B cell (primary cell): ENCODE measurements at regions of chr7 and their contacts with region 1.

Region 1: GRCh38 chr7:2451171-2452073 is 24.8 kb downstream of the GRIFIN start:
- DNase-seq: peak; percentile 83
- ATAC-seq: peak; percentile 96
- H3K4me3 ChIP-seq: peak overlapping the region in 4 of 5 experiments; percentile 34 to 56 (median 50)
- H3K4me3 Mint-ChIP-seq: peak overlapping the region; percentile 80
- H3K27ac ChIP-seq: no peak overlapping the region
- H3K27ac Mint-ChIP-seq: peak overlapping the region; percentile 26
- H3K4me1 ChIP-seq: peaks cover 8 to 11% of the 10 kb centered on the region in 2 donors
- H3K4me1 Mint-ChIP-seq: peaks cover 10% of the 10 kb centered on the region
- H3K27me3 ChIP-seq: no peaks in the 10 kb centered on the region
- H3K27me3 Mint-ChIP-seq: no peaks in the 10 kb centered on the region
- CTCF ChIP-seq: peak; percentile 91

Region 2: DNA sequence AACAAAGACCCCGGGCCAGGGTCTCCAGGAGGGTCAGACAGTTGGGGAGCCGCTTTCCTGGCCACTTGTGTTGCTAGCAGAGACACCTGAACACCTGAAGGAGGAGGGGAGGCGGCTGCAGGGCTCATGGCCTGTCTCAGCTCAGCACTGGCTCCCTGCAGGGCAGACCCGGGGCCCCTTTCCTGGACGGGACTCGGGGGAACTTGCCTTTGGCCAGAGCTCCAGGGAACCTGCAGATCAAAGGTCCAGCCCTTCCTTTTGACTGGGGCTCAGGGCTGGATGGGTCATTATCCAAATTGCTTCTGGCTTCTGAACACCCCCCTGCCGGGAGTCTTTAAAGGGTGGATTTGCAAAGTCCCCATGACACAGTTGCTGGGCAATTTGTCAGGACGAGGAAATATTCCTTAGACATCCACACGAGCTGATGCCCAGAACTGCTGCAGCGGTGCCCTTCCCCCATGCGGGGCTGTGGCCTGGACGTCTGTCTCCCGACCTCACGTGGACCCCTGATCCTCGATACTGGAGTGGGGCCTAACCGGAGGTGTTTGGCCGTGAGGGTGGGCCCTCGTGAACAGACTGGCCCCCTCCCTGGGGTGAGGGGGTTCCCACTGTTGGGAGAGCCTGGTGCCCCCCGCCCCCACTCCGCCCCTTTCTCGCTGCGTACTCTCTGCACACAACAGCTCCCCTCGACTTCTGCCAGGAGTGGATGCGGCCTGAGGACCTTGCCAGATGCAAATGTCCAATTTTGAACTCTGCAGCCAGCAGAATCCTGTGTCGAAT is 587.1 kb before region 1 on chr7:
- CTCF ChIA-PET with region 1: no interaction called
- POLR2A ChIA-PET with region 1: no interaction called
- intact Hi-C with region 1: no loop called
- DNase-seq: no peak
- ATAC-seq: no peak
- H3K4me3 ChIP-seq: no peak overlapping the region
- H3K4me3 Mint-ChIP-seq: no peak overlapping the region
- H3K27ac ChIP-seq: no peak overlapping the region
- H3K27ac Mint-ChIP-seq: no peak overlapping the region
- H3K4me1 ChIP-seq: peaks cover 4 to 14% of the 10 kb centered on the region in 2 donors
- H3K4me1 Mint-ChIP-seq: peaks cover 12% of the 10 kb centered on the region
- H3K27me3 ChIP-seq: no peaks in the 10 kb centered on the region
- H3K27me3 Mint-ChIP-seq: no peaks in the 10 kb centered on the region
- CTCF ChIP-seq: no peak

Region 3: DNA sequence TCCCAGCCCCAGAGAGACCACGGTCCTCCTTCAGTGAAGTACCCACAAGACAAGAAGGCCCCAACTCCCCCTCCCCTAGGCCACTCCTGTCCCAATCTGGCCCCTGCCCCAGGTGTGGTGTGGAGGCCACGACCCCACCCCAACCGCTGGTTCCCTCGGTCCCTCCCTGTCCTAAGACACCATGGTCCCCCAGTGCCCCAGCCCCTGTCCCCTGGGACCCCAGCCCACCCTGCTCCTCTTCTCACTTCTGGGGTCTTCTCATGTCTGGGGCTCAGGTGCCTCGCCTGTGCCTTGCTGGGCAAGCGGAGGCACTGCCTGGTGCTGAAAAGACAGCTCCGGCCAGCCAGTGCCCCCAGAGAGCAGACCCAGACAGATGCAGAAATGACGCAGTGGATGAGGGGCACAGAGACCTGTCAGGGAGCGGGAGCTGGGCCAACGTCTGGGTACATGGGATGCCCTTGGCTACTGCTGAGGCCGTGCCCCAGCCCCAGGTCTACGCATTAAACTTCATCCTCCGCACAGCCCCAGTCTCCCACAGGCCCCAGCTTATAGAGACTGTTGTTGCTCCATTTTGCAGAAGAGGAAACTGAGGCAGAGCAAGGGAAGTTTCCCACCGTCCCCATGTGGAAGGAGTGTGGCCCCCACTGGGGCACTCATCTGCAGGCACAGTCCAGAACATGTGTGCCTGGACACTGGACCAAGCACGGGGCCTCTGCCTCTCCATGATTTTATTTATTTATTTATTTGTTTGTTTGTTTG is 10.0 kb after region 1 on chr7:
- CTCF ChIA-PET with region 1: interaction called, 104 read pairs
- POLR2A ChIA-PET with region 1: no interaction called
- intact Hi-C with region 1: no loop called
- DNase-seq: no peak
- ATAC-seq: no peak
- H3K4me3 ChIP-seq: no peak overlapping the region
- H3K4me3 Mint-ChIP-seq: no peak overlapping the region
- H3K27ac ChIP-seq: no peak overlapping the region
- H3K27ac Mint-ChIP-seq: no peak overlapping the region
- H3K4me1 ChIP-seq: no peaks in the 10 kb centered on the region
- H3K4me1 Mint-ChIP-seq: peaks cover 2% of the 10 kb centered on the region
- H3K27me3 ChIP-seq: no peaks in the 10 kb centered on the region
- H3K27me3 Mint-ChIP-seq: no peaks in the 10 kb centered on the region
- CTCF ChIP-seq: no peak

Region 4: DNA sequence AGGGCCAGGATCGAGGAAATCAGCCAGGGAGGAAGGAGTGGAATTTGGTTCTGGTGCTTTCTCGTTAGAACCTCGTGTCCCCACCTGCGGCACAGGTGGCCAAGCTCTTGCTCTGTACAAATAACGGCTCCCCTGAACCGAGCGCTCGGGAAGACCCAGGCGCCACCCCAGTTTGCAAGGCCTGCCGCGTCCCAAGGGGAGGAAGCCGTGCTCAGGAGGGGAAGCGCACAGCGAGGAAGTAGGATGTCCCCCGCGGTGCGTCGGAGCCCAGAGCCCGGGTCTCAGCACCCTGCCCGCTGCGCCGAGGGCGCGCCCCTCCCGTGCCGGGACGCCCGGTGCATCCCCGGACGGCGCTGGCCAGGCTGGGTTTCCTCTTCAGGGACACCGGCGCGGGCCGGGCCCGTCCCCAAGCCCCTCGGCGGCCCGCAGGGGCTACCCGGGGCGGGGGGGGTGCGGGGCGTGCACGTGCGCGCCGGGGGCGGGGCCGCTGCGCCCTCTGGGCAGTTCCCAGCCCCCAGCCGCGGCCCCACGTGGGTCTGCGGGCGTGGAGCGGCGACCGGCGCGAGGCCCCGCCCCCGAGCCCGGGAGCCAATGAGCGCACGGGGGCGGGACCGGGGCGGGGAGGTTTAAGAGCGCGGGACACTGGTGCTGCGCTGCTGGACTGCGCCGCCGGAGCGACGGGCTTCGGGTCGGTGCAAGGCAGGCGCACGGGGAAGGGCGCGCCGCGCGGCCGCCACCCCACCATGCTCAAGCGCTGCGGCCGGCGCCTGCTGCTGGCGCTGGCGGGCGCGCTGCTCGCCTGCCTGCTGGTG is 67.9 kb after region 1 on chr7 and contains the start of gene LFNG:
- CTCF ChIA-PET with region 1: no interaction called
- POLR2A ChIA-PET with region 1: interaction called, 16 read pairs
- intact Hi-C with region 1: no loop called
- DNase-seq: peak; percentile 94
- ATAC-seq: peak; percentile 80
- H3K4me3 ChIP-seq: peak within 1 kb of the TSS; percentile 84 to 100 (median 97)
- H3K4me3 Mint-ChIP-seq: peak within 1 kb of the TSS; percentile 99
- H3K27ac ChIP-seq: peak within 1 kb of the TSS; percentile 62 to 75
- H3K27ac Mint-ChIP-seq: peak within 1 kb of the TSS; percentile 96
- H3K4me1 ChIP-seq: peaks cover 40 to 49% of the 10 kb centered on the region in 2 donors
- H3K4me1 Mint-ChIP-seq: peaks cover 52% of the 10 kb centered on the region
- H3K27me3 ChIP-seq: no peaks in the 10 kb centered on the region
- H3K27me3 Mint-ChIP-seq: no peaks in the 10 kb centered on the region
- CTCF ChIP-seq: no peak
- total RNA-seq, gene LFNG: 208 and 221 TPM in 2 replicates

Region 5: DNA sequence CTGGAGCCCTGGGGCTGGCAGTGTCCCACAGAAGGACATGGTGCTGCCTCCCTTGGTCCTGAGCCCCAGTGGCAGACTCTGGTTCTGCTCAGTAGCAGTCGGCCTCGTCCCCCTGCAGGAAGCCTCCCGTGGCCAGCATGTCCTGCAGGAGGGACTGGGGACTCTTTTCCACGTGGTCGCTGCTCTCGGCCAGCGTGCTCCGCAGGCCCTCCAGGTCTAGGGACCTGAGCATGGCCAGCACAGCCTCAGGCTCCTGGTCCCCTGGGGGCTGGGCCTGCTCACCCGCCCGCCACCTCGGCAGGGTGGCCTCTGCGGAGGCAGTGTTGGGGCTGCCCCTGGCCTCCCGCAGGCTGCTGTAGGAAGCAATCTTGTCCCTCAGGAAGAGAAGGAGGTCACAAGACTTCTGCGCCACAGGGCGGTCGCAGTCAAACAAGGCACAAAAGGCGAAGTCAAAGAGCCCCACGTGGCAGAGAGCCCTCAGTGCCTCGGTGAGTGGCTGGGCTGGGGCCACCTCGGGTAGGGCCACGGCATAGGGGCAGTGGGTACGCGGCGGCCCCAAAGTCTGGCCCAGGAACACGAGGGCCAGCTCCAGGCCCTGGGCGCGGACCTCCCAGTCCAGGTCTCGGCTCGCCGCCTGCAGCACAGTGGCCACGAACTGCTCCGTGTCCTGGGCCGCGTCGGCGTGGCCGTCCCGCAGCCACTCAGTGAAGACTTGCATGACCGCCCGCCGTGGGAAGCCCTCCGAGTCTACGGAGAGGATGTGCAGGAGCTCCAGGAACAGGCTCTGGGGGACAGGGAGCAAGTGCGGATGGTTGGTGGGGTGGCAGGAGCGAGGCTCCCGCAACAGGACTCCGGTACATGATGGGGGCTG is 86.8 kb after region 1 on chr7:
- CTCF ChIA-PET with region 1: no interaction called
- POLR2A ChIA-PET with region 1: no interaction called
- intact Hi-C with region 1: no loop called
- DNase-seq: peak; percentile 29
- ATAC-seq: no peak
- H3K4me3 ChIP-seq: no peak overlapping the region
- H3K4me3 Mint-ChIP-seq: no peak overlapping the region
- H3K27ac ChIP-seq: no peak overlapping the region
- H3K27ac Mint-ChIP-seq: no peak overlapping the region
- H3K4me1 ChIP-seq: no peaks in the 10 kb centered on the region
- H3K4me1 Mint-ChIP-seq: peaks cover 1% of the 10 kb centered on the region
- H3K27me3 ChIP-seq: no peaks in the 10 kb centered on the region
- H3K27me3 Mint-ChIP-seq: no peaks in the 10 kb centered on the region
- CTCF ChIP-seq: no peak

Region 6: DNA sequence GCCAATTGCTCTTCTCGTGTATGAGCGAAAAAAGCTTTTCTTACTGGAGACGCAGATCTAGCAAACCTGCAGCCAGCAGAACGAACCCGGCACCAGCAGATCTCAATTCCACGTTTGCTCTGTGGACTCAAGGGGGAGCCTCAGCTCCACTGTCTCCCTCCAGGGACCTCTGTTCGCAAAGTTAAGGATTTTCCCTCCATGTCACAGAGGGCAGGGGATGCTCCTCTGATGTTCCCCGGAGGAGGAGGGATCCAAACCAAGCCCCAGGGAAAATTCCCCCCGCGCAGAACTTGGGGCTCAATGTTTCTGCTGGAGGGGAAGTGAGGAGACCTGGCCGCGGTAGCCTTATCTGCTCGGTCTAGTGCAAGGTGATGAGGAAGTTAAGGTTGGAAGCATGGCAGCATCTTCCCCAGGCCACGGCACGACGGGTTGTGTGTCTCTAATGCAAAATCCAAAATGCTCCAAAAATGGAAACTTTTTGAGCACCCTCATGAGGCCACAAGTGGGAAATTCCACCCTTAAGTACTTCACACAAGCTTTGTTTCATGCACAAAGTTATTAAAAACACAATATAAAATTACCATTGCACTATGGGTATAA is 116.4 kb after region 1 on chr7:
- CTCF ChIA-PET with region 1: interaction called, 17 read pairs
- POLR2A ChIA-PET with region 1: no interaction called
- intact Hi-C with region 1: no loop called
- DNase-seq: peak; percentile 54
- ATAC-seq: peak; percentile 62
- H3K4me3 ChIP-seq: peak overlapping the region in 3 of 5 experiments; percentile 1 to 48 (median 22)
- H3K4me3 Mint-ChIP-seq: peak overlapping the region; percentile 55
- H3K27ac ChIP-seq: no peak overlapping the region
- H3K27ac Mint-ChIP-seq: peak overlapping the region; percentile 56
- H3K4me1 ChIP-seq: peaks cover 11 to 16% of the 10 kb centered on the region in 2 donors
- H3K4me1 Mint-ChIP-seq: peaks cover 18% of the 10 kb centered on the region
- H3K27me3 ChIP-seq: no peaks in the 10 kb centered on the region
- H3K27me3 Mint-ChIP-seq: no peaks in the 10 kb centered on the region
- CTCF ChIP-seq: no peak

Region 7: GRCh38 chr7:2680792-2681490 is 229.5 kb after region 1 on chr7:
- CTCF ChIA-PET with region 1: interaction called, 64 read pairs
- POLR2A ChIA-PET with region 1: no interaction called
- intact Hi-C with region 1: no loop called
- DNase-seq: peak; percentile 74
- ATAC-seq: peak; percentile 73
- H3K4me3 ChIP-seq: no peak overlapping the region
- H3K4me3 Mint-ChIP-seq: no peak overlapping the region
- H3K27ac ChIP-seq: no peak overlapping the region
- H3K27ac Mint-ChIP-seq: no peak overlapping the region
- H3K4me1 ChIP-seq: peaks cover 0 to 4% of the 10 kb centered on the region in 2 donors
- H3K4me1 Mint-ChIP-seq: no peaks in the 10 kb centered on the region
- H3K27me3 ChIP-seq: peaks cover 0 to 6% (median under 1%) of the 10 kb centered on the region in 4 experiments
- H3K27me3 Mint-ChIP-seq: peaks cover 12% of the 10 kb centered on the region
- CTCF ChIP-seq: peak; percentile 68

Region 8: DNA sequence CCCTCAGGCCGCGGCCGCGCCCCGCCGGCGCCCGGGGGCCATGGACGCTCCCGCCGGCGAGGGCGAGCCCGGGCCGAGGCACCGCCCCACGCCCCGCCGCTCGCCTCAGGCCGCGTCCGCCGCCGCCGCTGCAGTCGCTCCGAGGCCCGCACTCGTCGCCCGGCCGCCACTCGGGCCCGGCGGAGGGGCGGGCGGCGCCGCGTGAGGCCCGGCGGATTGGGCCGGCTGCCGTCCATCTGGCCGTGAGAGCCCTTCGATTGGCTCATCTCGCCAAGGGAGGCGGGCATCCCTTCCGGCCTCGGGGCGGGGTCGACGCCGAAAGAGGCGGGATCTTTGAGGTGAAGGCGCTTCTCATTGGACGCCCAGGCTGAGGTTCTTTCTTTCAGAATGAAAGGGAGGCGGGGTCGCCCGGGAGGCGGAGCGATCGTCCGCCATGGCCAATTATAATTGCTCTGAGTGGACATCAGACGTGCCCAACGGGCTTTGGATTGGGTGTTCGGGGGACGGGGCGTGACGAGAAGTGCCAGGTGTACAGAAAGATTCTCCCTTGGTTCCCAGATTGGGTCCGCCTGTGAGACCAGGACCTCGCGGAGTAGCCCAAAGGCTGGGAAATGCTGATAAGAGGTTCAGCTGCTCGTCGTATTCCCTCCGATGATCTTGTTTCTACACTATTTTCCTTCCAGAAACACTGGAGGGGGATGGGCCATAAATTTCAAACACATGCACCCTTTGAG is 392.9 kb after region 1 on chr7 and contains the start of gene GNA12:
- CTCF ChIA-PET with region 1: interaction called, 3 read pairs
- POLR2A ChIA-PET with region 1: no interaction called
- intact Hi-C with region 1: loop called (anchors 5 kb)
- DNase-seq: peak; percentile 98
- ATAC-seq: peak; percentile 93
- H3K4me3 ChIP-seq: peak within 1 kb of the TSS; percentile 50 to 70 (median 65)
- H3K4me3 Mint-ChIP-seq: peak within 1 kb of the TSS; percentile 95
- H3K27ac ChIP-seq: peak within 1 kb of the TSS in 1 of 2 donors; percentile 53
- H3K27ac Mint-ChIP-seq: peak within 1 kb of the TSS; percentile 80
- H3K4me1 ChIP-seq: peaks cover 34 to 45% of the 10 kb centered on the region in 2 donors
- H3K4me1 Mint-ChIP-seq: peaks cover 51% of the 10 kb centered on the region
- H3K27me3 ChIP-seq: no peaks in the 10 kb centered on the region
- H3K27me3 Mint-ChIP-seq: no peaks in the 10 kb centered on the region
- CTCF ChIP-seq: no peak
- total RNA-seq, gene GNA12: 110 and 114 TPM in 2 replicates